Lower leg skin (tissue), 4 donors: ENCODE measurements at regions of chr7 and their contacts with region 1.

Region 1: GRCh38 chr7:149811221-149811620 is 27.0 kb upstream of the ZNF862 start:
- DNase-seq: no peak
- H3K4me3 ChIP-seq: no peak overlapping the region
- CTCF ChIP-seq: no peak
- POLR2A ChIP-seq: no peak

Region 2: DNA sequence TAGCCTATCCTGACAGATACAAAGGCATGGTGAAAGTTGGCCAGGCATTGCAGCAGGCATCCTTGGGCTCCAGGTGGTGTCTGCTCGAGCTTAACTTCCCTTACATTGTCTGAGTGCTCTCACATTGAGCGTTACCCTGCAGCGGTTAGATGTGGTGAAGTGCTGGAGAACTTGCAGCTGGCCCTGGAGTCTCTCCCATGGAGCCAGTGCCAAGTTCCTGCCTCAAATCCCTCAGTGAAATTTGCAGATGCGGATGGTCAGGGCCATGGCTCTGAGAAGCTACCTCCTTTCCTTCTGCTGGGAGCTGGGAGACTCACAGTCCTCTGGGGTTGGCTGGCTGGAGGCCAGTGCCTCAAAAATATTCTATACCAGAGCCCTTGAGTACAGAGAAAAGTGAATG is 310.3 kb before region 1 on chr7:
- intact Hi-C with region 1: no loop called
- DNase-seq: no peak
- H3K4me3 ChIP-seq: no peak overlapping the region
- CTCF ChIP-seq: no peak
- POLR2A ChIP-seq: no peak

Region 3: DNA sequence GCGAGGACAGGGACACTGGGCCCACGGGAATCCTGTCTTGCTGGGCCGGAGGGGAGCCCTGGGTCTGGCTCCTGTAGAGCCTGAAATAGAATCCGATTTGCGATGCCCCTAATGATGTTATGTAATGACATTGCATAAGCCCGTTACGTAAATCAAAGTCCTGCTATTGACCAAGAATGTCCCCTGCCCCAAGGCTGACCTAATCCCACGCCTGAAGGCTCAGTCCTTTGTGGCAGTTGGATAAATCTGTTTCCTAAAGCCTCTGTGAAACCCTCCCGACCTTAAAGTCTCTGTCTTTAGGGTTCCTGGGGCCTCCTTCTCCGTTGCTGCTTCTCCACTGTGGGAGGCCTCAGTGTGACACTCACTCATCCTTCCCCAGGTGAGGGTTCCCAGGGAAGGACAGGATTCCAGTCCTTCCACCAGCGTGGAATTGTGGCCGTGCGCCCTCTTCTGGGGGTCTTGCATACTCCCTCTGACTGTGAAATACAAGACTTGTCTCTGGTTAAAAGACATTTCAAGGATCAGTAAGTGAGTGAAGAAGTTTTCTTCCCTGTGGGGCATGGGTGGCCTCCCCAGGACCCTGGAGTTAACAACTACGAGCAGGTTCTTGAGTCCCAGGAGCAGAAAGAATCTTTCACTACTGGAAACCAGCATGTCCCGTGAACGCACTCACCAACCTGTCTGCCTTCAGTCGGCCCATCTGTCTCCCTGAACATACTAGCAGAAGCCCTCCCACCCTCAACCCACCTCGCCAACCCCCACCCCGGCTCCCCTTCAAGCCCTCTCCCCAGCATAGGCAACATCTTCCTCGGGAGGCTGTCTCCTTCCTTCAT is 57.6 kb before region 1 on chr7:
- intact Hi-C with region 1: no loop called
- DNase-seq: peak in 1 of 2 donors; percentile 83
- H3K4me3 ChIP-seq: no peak overlapping the region
- CTCF ChIP-seq: no peak
- POLR2A ChIP-seq: no peak

Region 4: DNA sequence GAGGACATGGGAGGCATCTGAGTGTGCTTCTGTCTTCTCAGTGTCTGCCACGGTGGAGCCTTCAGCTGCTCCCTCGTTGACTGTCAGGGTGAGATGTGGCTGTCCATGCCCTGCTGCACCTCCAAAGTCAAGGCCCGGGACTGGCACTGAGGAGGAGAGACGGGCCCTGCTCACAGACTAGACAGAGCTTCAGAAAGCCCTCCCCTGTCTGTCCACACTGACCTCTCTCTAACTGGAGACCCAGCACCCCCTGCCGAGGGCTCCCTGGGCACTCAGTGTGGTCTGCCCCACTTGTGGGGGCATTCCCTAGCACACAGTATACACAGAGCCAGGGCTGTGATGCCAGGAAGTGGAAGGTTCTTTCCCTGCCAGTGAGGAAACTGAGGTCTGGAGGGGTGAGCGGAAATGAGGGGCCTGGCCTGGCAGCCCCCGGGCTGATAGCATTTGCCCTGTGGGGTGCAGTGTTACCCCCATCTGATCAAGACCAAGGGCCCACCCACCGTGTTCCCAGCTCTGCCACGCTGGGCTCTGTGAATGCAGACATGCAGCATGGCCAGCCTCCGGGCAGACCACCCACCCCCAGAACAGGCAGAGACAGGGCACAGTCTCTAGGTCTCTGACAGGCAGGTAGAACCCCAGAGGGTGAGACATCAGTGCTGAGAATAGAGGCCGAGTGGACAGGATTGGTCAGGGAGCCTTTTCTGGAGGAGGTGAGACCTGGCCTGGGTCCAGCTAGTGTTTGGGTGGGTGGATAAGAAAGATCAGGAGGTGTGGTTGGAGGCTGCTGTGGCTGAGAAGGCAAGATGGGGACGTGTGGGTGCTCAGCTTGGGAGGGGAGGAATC is 15.9 kb after region 1 on chr7:
- intact Hi-C with region 1: no loop called
- DNase-seq: no peak
- H3K4me3 ChIP-seq: no peak overlapping the region
- CTCF ChIP-seq: no peak
- POLR2A ChIP-seq: no peak

Region 5: GRCh38 chr7:149869867-149870266 is 58.6 kb after region 1 on chr7:
- intact Hi-C with region 1: loop called (anchors 2 kb)
- DNase-seq: peak in 1 of 2 donors; percentile 72
- H3K4me3 ChIP-seq: no peak overlapping the region
- CTCF ChIP-seq: no peak
- POLR2A ChIP-seq: no peak